ENCODE measurements at regions of chr1 and their contacts with region 1.

Region 1: GRCh38 chr1:184036517-184036949 is 995 bp downstream of the COLGALT2 start:
- DNase-seq: peak in 1 of 3 donors; percentile 53
- ATAC-seq: peak; percentile 70 to 77
- H3K4me3 ChIP-seq: peak overlapping the region; percentile 68
- H3K27ac ChIP-seq: peak overlapping the region; percentile 15
- H3K4me1 ChIP-seq: no peaks in the 10 kb centered on the region
- H3K27me3 ChIP-seq: no peaks in the 10 kb centered on the region

Region 2: GRCh38 chr1:183932412-183932811 is 104.1 kb before region 1 on chr1:
- intact Hi-C with region 1: loop called in 1 of 4 experiments (anchors 10 kb)
- DNase-seq: peak; percentile 92 to 96 (median 93)
- ATAC-seq: peak; percentile 86 to 90
- H3K4me3 ChIP-seq: no peak overlapping the region
- H3K27ac ChIP-seq: peak overlapping the region; percentile 21
- H3K4me1 ChIP-seq: no peaks in the 10 kb centered on the region
- H3K27me3 ChIP-seq: no peaks in the 10 kb centered on the region

Region 3: GRCh38 chr1:183942933-183943693 is 93.4 kb before region 1 on chr1:
- intact Hi-C with region 1: loop called in 2 of 4 experiments (anchors 10 kb)
- DNase-seq: no peak
- ATAC-seq: no peak
- H3K4me3 ChIP-seq: no peak overlapping the region
- H3K27ac ChIP-seq: peak overlapping the region; percentile 27
- H3K4me1 ChIP-seq: no peaks in the 10 kb centered on the region
- H3K27me3 ChIP-seq: no peaks in the 10 kb centered on the region